Stomach (tissue), 19 donors: ENCODE measurements at regions of chr10 and their contacts with region 1.

Region 1: GRCh38 chr10:14959276-14960057 is at the start of gene MEIG1:
- DNase-seq: peak; percentile 93 to 97
- H3K4me3 ChIP-seq: peak within 1 kb of the TSS; percentile 66 to 85 (median 80)
- H3K27ac ChIP-seq: peak within 1 kb of the TSS; percentile 93 to 97 (median 95)
- H3K4me1 ChIP-seq: peaks cover 4 to 24% (median 14%) of the 10 kb centered on the region in 4 donors
- H3K27me3 ChIP-seq: no peaks in the 10 kb centered on the region
- CTCF ChIP-seq: no peak
- EP300 ChIP-seq: no peak
- POLR2A ChIP-seq: peak in 1 of 4 donors; percentile 25
- total RNA-seq, gene MEIG1: not detected

Region 2: DNA sequence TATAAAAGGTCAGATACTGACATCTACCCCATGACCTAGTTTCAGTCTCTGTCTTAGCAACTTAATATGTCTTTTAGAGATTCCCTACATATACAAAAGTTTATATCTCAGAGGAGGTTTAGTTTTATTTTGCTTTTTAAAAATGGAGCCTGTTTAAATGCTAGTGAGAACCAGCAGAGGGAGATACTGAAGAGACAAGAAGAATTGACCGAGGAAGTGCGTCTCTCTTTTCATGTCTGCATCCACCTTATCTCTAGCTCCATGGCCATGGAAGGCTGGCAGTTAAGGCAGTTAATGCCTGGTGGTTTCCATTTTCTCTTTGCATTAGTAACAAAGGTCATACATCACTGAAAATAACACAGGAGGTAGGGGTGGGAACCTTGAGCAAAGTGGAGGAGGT is 70.1 kb before region 1 on chr10:
- intact Hi-C with region 1: no loop called
- DNase-seq: peak in 1 of 2 donors; percentile 6
- H3K4me3 ChIP-seq: no peak overlapping the region
- H3K27ac ChIP-seq: no peak overlapping the region
- H3K4me1 ChIP-seq: no peaks in the 10 kb centered on the region
- H3K27me3 ChIP-seq: no peaks in the 10 kb centered on the region
- CTCF ChIP-seq: no peak
- EP300 ChIP-seq: no peak
- POLR2A ChIP-seq: no peak

Region 3: DNA sequence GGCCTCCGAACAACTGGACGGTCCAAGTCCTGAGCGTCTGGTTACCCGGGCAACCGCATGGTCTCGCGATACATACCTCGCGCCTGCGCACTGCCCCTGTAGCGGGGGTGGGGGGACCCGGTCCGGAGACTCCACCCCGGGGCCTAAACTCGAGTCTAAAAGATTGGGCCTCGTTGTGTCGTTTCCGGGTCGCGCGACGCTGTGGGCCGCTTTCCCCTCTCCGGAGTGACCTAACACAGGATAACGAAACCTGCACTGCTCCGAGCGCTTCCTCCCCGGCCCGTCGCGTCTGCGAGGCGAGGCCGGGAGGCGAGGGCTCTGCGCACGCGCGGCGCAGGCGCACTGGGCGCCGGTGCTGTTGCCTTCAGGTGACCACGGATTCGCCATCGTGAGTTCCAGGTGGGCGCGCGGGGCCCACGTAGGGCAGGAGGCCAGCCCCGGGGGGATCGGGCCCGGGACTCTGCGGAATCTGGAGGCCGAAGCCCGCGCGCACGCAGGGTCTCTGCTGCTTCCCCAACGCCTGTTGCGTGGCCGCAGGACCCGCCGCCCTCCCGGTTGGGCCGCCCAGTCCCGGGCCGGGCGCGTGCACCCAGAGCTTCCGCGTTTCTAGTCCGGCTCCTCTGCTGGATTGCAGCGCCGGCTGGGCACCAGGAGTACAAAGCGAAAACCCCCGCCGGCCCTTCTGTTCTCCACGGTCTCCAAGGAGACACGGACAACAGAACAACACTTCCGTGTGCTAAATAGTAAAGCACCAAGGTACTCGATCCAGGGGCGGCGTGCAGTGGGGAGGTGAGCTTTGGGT is 137.7 kb after region 1 on chr10 and contains the start of gene RPP38:
- intact Hi-C with region 1: loop called (anchors 10 kb)
- DNase-seq: peak; percentile 98
- H3K4me3 ChIP-seq: peak within 1 kb of the TSS; percentile 70 to 84 (median 80)
- H3K27ac ChIP-seq: peak within 1 kb of the TSS; percentile 95 to 98 (median 97)
- H3K4me1 ChIP-seq: peaks cover 19 to 46% (median 33%) of the 10 kb centered on the region in 4 donors
- H3K27me3 ChIP-seq: peaks cover 0 to 2% (median 0%) of the 10 kb centered on the region in 3 donors
- CTCF ChIP-seq: no peak
- EP300 ChIP-seq: no peak
- POLR2A ChIP-seq: peak in 1 of 4 donors; percentile 60
- total RNA-seq, gene RPP38: 4.5 to 29.4 (median 18.9) TPM in 4 of 5 donors, not detected in the other